Activated CD4-positive, alpha-beta T cell treated with anti-CD3 and anti-CD28 coated beads for 36 hours (primary cell): ENCODE measurements at regions of chr6 and their contacts with region 1.

Region 1: DNA sequence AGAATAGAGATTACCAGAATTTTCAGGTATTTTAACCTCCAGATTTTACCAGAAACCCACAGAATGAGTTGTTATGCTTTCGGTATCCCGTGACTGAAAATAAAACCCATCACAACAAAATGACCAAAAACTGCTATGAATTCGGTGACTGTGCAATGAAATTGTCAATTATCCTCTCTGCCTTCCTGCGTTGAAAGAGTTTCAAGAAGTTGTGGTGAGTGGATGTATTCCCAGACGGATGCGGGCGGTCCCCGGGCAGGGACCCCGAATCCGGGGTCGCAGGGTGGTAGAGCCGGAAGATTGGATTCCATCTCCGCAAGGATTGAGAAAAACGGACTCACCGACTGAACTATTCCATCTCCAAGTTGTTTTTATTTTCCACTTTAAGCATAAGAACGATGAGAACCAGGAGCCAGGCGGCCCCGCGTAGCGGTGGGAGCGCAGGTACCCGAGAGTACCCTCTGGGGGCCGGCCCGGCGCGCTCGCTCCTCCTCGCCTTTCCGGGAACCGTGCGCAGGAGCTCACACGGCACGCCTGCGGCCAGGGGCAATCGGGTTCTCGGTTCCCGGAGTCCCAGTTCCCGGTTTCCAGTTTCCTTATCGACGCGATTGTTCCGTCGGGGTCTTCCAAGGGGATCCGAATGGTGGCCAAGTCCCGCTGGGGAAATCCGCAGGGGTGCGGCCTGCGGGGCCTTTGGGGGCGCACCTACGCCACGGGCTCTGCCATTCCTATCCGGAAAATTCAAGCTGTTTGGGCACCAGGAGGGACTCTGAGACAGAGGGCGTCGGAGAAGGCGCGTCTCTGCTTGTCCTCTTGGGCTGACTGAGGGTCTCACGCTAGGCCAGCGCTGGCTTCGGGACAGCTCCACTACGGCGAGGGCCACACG is 104.9 kb upstream of the PRDM1 start:
- DNase-seq: peak; percentile 66
- ATAC-seq: peak; percentile 67
- H3K4me3 Mint-ChIP-seq: peak overlapping the region; percentile 71
- H3K27ac Mint-ChIP-seq: peak overlapping the region; percentile 79
- H3K4me1 Mint-ChIP-seq: peaks cover 37% of the 10 kb centered on the region
- H3K27me3 Mint-ChIP-seq: peaks cover 50% of the 10 kb centered on the region

Region 2: DNA sequence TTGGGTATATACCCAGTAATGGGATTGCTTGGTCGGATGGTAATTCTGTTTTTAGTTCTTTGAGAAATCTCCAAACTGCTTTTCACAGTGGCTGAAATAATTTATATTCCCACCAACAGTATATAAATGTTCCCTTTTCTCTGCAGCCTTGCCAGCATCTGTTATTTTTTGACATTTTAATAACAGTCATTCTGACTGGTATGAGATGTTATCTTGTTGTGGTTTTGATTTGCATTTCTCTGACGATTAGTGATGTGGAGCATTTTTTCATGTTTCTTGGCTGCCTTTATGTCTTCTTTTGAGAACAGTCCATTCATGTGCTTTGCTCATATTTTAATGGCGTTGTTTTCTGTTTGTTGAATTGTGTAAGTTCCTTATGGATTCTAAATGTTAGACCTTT is 1763.1 kb before region 1 on chr6:
- CTCF ChIA-PET with region 1: no interaction called
- POLR2A ChIA-PET with region 1: no interaction called
- intact Hi-C with region 1: no loop called
- DNase-seq: no peak
- ATAC-seq: no peak
- H3K4me3 Mint-ChIP-seq: no peak overlapping the region
- H3K27ac Mint-ChIP-seq: no peak overlapping the region
- H3K4me1 Mint-ChIP-seq: no peaks in the 10 kb centered on the region
- H3K27me3 Mint-ChIP-seq: no peaks in the 10 kb centered on the region

Region 3: GRCh38 chr6:105646391-105646867 is 334.8 kb before region 1 on chr6:
- CTCF ChIA-PET with region 1: no interaction called
- POLR2A ChIA-PET with region 1: no interaction called
- intact Hi-C with region 1: loop called (anchors 2 kb)
- DNase-seq: peak; percentile 53
- ATAC-seq: peak; percentile 90
- H3K4me3 Mint-ChIP-seq: no peak overlapping the region
- H3K27ac Mint-ChIP-seq: no peak overlapping the region
- H3K4me1 Mint-ChIP-seq: peaks cover 62% of the 10 kb centered on the region
- H3K27me3 Mint-ChIP-seq: peaks cover 44% of the 10 kb centered on the region

Region 4: GRCh38 chr6:105880030-105880492 is 101.2 kb before region 1 on chr6:
- CTCF ChIA-PET with region 1: no interaction called
- POLR2A ChIA-PET with region 1: no interaction called
- intact Hi-C with region 1: loop called in 1 of 2 experiments (anchors 5 kb)
- DNase-seq: peak; percentile 71
- ATAC-seq: peak; percentile 91
- H3K4me3 Mint-ChIP-seq: peak overlapping the region; percentile 3
- H3K27ac Mint-ChIP-seq: no peak overlapping the region
- H3K4me1 Mint-ChIP-seq: peaks cover 15% of the 10 kb centered on the region
- H3K27me3 Mint-ChIP-seq: peaks cover 27% of the 10 kb centered on the region

Region 5: DNA sequence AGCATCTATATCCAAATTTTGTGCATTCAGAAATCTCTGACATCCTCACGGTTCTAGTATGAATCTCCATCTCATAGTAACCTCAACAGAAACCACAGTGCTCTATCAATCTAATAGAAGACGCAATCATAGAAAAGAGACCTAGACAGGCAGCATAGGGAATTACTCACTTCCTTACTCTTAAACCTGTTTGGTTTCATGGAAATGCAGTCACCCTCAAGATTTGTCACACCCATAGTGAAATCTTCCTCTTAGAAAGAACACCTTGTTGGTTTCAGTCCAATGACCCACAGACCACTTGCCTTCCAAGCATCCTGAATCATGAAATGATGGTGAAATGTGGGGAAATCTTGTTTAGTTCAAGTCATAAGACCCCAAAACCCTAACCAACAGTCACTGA is 61.2 kb before region 1 on chr6:
- CTCF ChIA-PET with region 1: no interaction called
- POLR2A ChIA-PET with region 1: no interaction called
- intact Hi-C with region 1: loop called (anchors 1 kb)
- DNase-seq: peak; percentile 29
- ATAC-seq: peak; percentile 88
- H3K4me3 Mint-ChIP-seq: no peak overlapping the region
- H3K27ac Mint-ChIP-seq: peak overlapping the region; percentile 26
- H3K4me1 Mint-ChIP-seq: peaks cover 10% of the 10 kb centered on the region
- H3K27me3 Mint-ChIP-seq: peaks cover 11% of the 10 kb centered on the region

Region 6: GRCh38 chr6:106056060-106056745 is 75.0 kb after region 1 on chr6:
- CTCF ChIA-PET with region 1: no interaction called
- POLR2A ChIA-PET with region 1: no interaction called
- intact Hi-C with region 1: no loop called
- DNase-seq: no peak
- ATAC-seq: no peak
- H3K4me3 Mint-ChIP-seq: no peak overlapping the region
- H3K27ac Mint-ChIP-seq: no peak overlapping the region
- H3K4me1 Mint-ChIP-seq: peaks cover 16% of the 10 kb centered on the region
- H3K27me3 Mint-ChIP-seq: no peaks in the 10 kb centered on the region

Region 7: GRCh38 chr6:106085984-106086813 is 105.0 kb after region 1 on chr6 and contains the start of gene PRDM1:
- CTCF ChIA-PET with region 1: interaction called, 3 read pairs
- POLR2A ChIA-PET with region 1: no interaction called
- intact Hi-C with region 1: loop called in 1 of 2 experiments (anchors 1 kb)
- DNase-seq: peak; percentile 83
- ATAC-seq: peak; percentile 66
- H3K4me3 Mint-ChIP-seq: peak within 1 kb of the TSS; percentile 76
- H3K27ac Mint-ChIP-seq: peak within 1 kb of the TSS; percentile 84
- H3K4me1 Mint-ChIP-seq: peaks cover 71% of the 10 kb centered on the region
- H3K27me3 Mint-ChIP-seq: peaks cover 49% of the 10 kb centered on the region
- total RNA-seq, gene PRDM1: 20.1 to 35.6 TPM

Region 8: DNA sequence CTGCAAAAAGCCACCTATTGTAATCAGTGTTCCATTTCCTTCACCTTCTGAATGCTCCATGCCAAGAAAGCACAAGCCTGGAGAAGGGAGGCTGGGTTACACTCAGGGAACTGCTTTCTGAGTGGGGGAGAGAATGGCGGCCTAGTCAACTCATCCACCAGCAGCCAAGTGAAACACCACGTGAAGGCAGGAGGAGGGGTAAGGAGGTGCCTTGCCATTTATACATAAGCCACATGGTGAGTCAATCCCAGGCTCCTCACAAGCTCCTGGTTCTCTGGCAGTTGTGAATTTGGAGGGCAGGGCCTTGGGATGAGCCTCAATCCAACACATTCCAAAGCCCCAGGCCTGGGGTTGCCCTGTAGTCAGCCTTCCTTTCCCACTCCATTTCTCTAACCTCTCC is 843.9 kb after region 1 on chr6:
- CTCF ChIA-PET with region 1: no interaction called
- POLR2A ChIA-PET with region 1: no interaction called
- intact Hi-C with region 1: no loop called
- DNase-seq: no peak
- ATAC-seq: no peak
- H3K4me3 Mint-ChIP-seq: no peak overlapping the region
- H3K27ac Mint-ChIP-seq: no peak overlapping the region
- H3K4me1 Mint-ChIP-seq: no peaks in the 10 kb centered on the region
- H3K27me3 Mint-ChIP-seq: peaks cover 10% of the 10 kb centered on the region